ENCODE measurements at regions of chr10 and their contacts with region 1.

Region 1: DNA sequence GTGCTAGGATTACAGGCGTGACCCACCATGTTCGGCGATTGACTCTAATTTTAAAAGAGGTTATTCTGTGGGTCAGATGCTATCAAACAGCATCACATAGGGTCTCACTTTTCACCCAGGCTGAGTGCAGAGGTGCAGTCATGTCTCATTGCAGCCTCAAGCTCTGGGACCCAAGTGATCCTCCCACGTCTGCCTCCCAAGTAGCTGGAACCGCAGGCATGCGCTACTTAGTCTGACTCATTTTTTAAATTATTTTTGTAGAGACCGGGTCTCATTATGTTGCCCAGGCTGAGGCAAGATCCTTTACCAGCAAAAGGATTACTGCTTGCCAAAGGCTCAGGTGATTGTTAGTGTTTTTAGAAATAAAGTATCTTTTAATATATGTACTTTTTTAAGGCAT is 42.9 kb upstream of the STOX1 start:
- DNase-seq: no peak
- H3K4me3 ChIP-seq: no peak overlapping the region
- H3K27ac ChIP-seq: no peak overlapping the region
- H3K4me1 ChIP-seq: no peaks in the 10 kb centered on the region
- H3K27me3 ChIP-seq: no peaks in the 10 kb centered on the region
- CTCF ChIP-seq: no peak
- POLR2A ChIP-seq: no peak

Region 2: GRCh38 chr10:68717435-68717834 is 67.0 kb before region 1 on chr10:
- intact Hi-C with region 1: loop called (anchors 2 kb)
- DNase-seq: no peak
- H3K4me3 ChIP-seq: no peak overlapping the region
- H3K27ac ChIP-seq: no peak overlapping the region
- H3K4me1 ChIP-seq: no peaks in the 10 kb centered on the region
- H3K27me3 ChIP-seq: no peaks in the 10 kb centered on the region
- CTCF ChIP-seq: no peak
- POLR2A ChIP-seq: no peak

Region 3: GRCh38 chr10:69202332-69202731 is 417.9 kb after region 1 on chr10:
- intact Hi-C with region 1: loop called (anchors 5 kb)
- DNase-seq: no peak
- H3K4me3 ChIP-seq: no peak overlapping the region
- H3K27ac ChIP-seq: no peak overlapping the region
- H3K4me1 ChIP-seq: no peaks in the 10 kb centered on the region
- H3K27me3 ChIP-seq: no peaks in the 10 kb centered on the region
- CTCF ChIP-seq: no peak
- POLR2A ChIP-seq: no peak

Measured in breast epithelium (tissue), 4 donors.